Testis (tissue), 5 donors: ENCODE measurements at regions of chr1 and their contacts with region 1.

Region 1: DNA sequence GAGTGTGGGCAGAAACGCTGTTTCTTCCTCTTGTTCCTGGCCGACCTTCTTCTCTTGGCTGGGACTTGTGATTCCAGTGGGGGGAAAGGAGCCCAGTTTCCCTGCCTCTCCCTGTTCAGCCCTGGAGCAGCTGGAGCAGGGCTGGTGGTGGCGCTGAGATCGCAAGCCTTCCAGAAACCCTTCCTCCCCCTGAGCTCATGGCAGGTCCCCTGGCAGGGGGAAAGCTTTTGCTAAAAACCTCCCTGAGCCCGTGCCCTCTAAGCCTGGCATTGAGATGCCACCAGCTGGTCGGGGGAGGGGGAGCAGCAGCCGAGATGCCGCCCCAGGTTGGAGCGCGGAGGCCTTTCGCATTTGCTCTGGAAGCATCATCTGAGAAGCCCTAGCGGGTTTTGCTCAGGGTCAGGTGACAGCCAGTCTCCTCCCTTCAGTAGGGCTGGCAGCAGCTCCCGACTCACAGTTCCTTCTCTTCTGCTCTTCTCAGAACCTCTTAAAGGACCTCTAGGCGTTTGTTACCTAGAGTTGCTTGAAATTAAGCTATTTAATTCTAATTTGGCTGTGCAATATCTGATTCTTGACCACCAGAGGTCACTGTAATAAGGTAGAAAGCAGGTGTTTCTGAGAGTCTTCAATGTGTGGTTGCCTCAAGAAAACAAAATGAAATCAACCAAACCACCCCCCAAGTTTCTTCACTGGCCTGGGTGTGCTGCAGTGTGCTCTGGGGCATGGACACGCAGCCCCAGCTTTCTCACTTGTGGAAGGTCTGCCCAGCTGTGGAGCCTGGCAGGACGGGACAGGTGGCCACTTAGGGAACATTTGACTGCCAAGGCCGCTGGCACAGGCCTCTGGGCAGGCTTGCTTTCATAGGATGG is 257.3 kb downstream of the CAMTA1 start:
- DNase-seq: peak; percentile 46
- H3K4me3 ChIP-seq: no peak overlapping the region
- H3K27ac ChIP-seq: no peak overlapping the region
- H3K4me1 ChIP-seq: no peaks in the 10 kb centered on the region
- H3K27me3 ChIP-seq: no peaks in the 10 kb centered on the region
- CTCF ChIP-seq: peak; percentile 35 to 52 (median 41)
- POLR2A ChIP-seq: no peak

Region 2: DNA sequence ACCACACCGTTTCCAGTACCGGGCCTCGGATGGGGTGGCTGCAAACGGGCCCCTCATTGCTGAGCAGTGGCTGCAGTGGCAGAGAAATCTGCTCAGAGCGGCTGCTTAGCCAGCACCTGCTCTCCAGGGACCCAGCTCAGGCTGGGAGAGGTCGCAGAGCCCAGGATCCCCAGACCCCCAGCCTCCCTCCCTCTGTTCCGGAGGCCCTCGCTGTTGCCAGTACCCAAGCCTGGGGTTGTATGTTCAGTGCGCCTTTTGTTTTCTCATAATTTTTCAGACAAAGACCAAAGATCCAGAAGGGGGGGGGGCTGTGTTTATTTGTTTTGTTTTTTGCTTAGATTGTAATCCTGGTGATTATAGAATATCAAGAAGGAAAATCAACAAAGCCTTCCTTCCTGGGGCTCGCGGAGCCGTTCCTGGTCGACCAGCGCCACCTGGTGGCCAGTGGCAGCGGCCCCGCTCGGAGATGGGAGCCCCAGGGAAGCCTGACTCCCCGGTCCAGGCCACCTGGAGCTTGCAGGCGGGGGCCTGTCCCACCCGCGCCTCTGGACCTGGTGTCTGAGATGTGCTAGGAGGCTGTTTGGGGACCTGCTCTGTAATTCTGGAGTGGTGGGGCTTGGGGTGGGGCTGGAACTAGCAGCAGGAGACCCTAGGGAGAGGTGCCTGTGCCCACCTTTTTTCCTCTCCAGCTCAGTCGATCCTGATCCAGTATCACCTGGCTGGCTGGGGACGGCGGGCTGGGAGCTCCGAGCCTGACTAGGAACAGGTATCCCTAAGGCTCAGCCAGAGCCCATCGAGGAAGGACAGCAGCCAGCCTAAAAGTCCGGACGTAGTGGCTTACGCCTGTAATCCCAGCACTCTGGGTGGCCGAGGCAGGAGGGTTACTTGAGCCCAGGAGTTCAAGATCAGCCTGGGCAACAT is 604.7 kb after region 1 on chr1:
- intact Hi-C with region 1: loop called (anchors 10 kb)
- DNase-seq: peak; percentile 80
- H3K4me3 ChIP-seq: no peak overlapping the region
- H3K27ac ChIP-seq: no peak overlapping the region
- H3K4me1 ChIP-seq: peaks cover 5% of the 10 kb centered on the region
- H3K27me3 ChIP-seq: no peaks in the 10 kb centered on the region
- CTCF ChIP-seq: peak; percentile 96 to 99 (median 96)
- POLR2A ChIP-seq: no peak